Natural killer cell (primary cell): ENCODE measurements at regions of chr3 and their contacts with region 1.

Region 1: DNA sequence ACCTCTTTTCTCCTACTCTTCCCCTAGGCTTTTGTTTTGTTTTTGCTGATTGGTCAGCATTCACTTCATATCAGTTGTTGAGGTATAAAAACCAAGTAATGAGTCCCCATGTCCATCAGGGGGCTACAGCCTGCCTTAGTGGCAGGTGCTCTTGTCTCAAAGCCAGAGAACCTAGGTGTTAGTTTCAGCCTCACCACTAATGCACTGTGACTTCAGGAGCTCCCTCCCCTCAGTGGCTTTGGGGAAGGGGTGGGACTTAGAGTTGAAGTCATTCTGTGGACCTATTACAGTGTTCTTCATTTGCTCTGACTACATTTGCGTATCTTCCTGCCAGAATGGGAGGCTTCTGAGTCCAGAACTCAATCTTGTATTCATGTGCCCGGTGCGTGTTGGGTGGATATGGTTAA is 41.6 kb downstream of the NR2C2 start:
- DNase-seq: peak; percentile 26 to 41
- ATAC-seq: peak; percentile 92 to 99 (median 98)
- H3K4me3 ChIP-seq: no peak overlapping the region
- H3K4me3 Mint-ChIP-seq: no peak overlapping the region
- H3K27ac ChIP-seq: no peak overlapping the region
- H3K27ac Mint-ChIP-seq: peak overlapping the region; percentile 25 to 56
- H3K4me1 ChIP-seq: peaks cover 6% of the 10 kb centered on the region
- H3K4me1 Mint-ChIP-seq: peaks cover 47 to 55% of the 10 kb centered on the region in 2 donors
- H3K27me3 ChIP-seq: no peaks in the 10 kb centered on the region
- H3K27me3 Mint-ChIP-seq: no peaks in the 10 kb centered on the region
- CTCF ChIP-seq: no peak

Region 2: GRCh38 chr3:14947886-14948555 is 41.0 kb before region 1 on chr3:
- intact Hi-C with region 1: loop called (anchors 5 kb)
- DNase-seq: peak; percentile 98
- ATAC-seq: peak; percentile 85 to 95 (median 86)
- H3K4me3 ChIP-seq: peak overlapping the region; percentile 100
- H3K4me3 Mint-ChIP-seq: peak overlapping the region; percentile 98
- H3K27ac ChIP-seq: peak overlapping the region; percentile 100
- H3K27ac Mint-ChIP-seq: peak overlapping the region; percentile 98 to 100
- H3K4me1 ChIP-seq: peaks cover 13% of the 10 kb centered on the region
- H3K4me1 Mint-ChIP-seq: peaks cover 35 to 49% of the 10 kb centered on the region in 2 donors
- H3K27me3 ChIP-seq: no peaks in the 10 kb centered on the region
- H3K27me3 Mint-ChIP-seq: no peaks in the 10 kb centered on the region
- CTCF ChIP-seq: no peak